Endothelial cell of umbilical vein (primary cell): ENCODE measurements at regions of chr21 and their contacts with region 1.

Region 1: DNA sequence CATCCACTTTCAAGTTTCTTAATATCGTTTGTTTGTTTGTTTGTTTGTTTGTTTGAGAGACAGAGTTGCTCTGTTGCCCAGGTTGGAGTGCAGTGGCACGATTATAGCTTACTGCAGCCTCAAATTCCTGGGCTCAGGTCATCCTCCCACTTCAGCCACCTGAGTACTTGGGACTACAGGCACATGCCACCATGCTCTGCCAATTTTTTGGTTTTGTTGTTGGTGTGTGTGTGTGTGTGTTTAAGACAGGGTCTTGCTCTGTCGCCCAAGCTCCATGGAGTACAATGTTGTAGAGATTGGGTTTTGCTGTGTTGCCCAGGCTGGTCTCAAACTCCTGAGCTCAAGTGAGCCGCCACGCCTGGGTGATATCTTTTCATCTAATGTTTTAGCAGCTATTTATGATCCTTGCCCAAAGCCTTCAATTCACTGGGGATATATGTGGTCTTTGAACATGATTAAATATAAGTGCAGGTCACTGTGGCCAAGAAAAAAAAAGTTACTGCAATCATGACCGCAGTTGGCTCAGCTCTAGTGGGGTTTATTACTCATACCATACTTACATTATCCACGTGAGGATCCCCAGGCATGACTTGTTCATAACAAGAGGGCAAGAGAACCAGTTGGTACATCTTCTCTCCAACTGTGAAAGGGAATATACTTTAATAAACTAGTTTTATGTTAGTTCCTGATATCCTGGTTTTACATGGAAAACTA is 8.0 kb downstream of the RRP1B start:
- DNase-seq: no peak
- H3K4me3 ChIP-seq: no peak overlapping the region
- H3K27ac ChIP-seq: no peak overlapping the region
- H3K4me1 ChIP-seq: peaks cover 8% of the 10 kb centered on the region
- H3K27me3 ChIP-seq: no peaks in the 10 kb centered on the region
- CTCF ChIP-seq: no peak
- POLR2A ChIP-seq: no peak

Region 2: GRCh38 chr21:42858185-42858847 is 809.0 kb before region 1 on chr21:
- CTCF ChIA-PET with region 1: no interaction called
- POLR2A ChIA-PET with region 1: no interaction called
- dilution Hi-C with region 1: no loop called
- intact Hi-C with region 1: no loop called
- DNase-seq: no peak
- H3K4me3 ChIP-seq: no peak overlapping the region
- H3K27ac ChIP-seq: no peak overlapping the region
- H3K4me1 ChIP-seq: peaks cover 16% of the 10 kb centered on the region
- H3K27me3 ChIP-seq: no peaks in the 10 kb centered on the region
- CTCF ChIP-seq: no peak
- POLR2A ChIP-seq: no peak

Region 3: GRCh38 chr21:43775795-43776430 is 108.6 kb after region 1 on chr21 and contains the start of gene CSTB:
- CTCF ChIA-PET with region 1: no interaction called
- POLR2A ChIA-PET with region 1: no interaction called
- dilution Hi-C with region 1: no loop called
- intact Hi-C with region 1: loop called (anchors 10 kb)
- DNase-seq: peak; percentile 68
- H3K4me3 ChIP-seq: peak within 1 kb of the TSS; percentile 64 to 82 (median 72)
- H3K27ac ChIP-seq: peak within 1 kb of the TSS; percentile 51
- H3K4me1 ChIP-seq: peaks cover 12% of the 10 kb centered on the region
- H3K27me3 ChIP-seq: peaks cover 2% of the 10 kb centered on the region in 2 experiments
- CTCF ChIP-seq: no peak
- POLR2A ChIP-seq: peak; percentile 83
- total RNA-seq, gene CSTB: 65.8 and 69.2 TPM in 2 replicates